ENCODE measurements at regions of chr1 and their contacts with region 1.

Region 1: GRCh38 chr1:107782217-107782845 is 182.6 kb downstream of the VAV3 start:
- DNase-seq: peak; percentile 34
- ATAC-seq: peak; percentile 59; the same call in 1 of the 2 replicates
- H3K4me3 ChIP-seq: no peak overlapping the region
- H3K27ac ChIP-seq: no peak overlapping the region
- H3K4me1 ChIP-seq: no peaks in the 10 kb centered on the region
- H3K27me3 ChIP-seq: peaks cover 6% of the 10 kb centered on the region; the same call in 1 of the 2 replicates
- CTCF ChIP-seq: peak; percentile 46 to 71 (median 48); a peak in 4 of 6 replicates
- POLR2A ChIP-seq: no peak
- RAD21 ChIP-seq: peak; percentile 78

Region 2: GRCh38 chr1:108125312-108126138 is 343.2 kb after region 1 on chr1:
- CTCF ChIA-PET with region 1: interaction called, 183 read pairs
- POLR2A ChIA-PET with region 1: interaction called, 3 read pairs
- RAD21 ChIA-PET with region 1: interaction called, 13 to 14 read pairs
- intact Hi-C with region 1: loop called (anchors 1 kb)
- DNase-seq: peak; percentile 57
- ATAC-seq: peak; percentile 95
- H3K4me3 ChIP-seq: no peak overlapping the region
- H3K27ac ChIP-seq: no peak overlapping the region
- H3K4me1 ChIP-seq: no peaks in the 10 kb centered on the region
- H3K27me3 ChIP-seq: peaks cover 4% of the 10 kb centered on the region
- CTCF ChIP-seq: peak; percentile 61 to 90 (median 85); a peak in 5 of 6 replicates
- POLR2A ChIP-seq: no peak
- RAD21 ChIP-seq: peak; percentile 92

Region 3: GRCh38 chr1:108559215-108560186 is 777.2 kb after region 1 on chr1 and contains the start of gene EEIG2:
- CTCF ChIA-PET with region 1: interaction called, 10 read pairs
- POLR2A ChIA-PET with region 1: no interaction called
- RAD21 ChIA-PET with region 1: no interaction called
- intact Hi-C with region 1: loop called (anchors 5 kb)
- DNase-seq: peak; percentile 69
- ATAC-seq: peak; percentile 83
- H3K4me3 ChIP-seq: peak within 1 kb of the TSS; percentile 64 to 70
- H3K27ac ChIP-seq: peak within 1 kb of the TSS; percentile 48; the same call in 1 of the 2 replicates
- H3K4me1 ChIP-seq: peaks cover 11 to 23% of the 10 kb centered on the region in 2 experiments
- H3K27me3 ChIP-seq: no peaks in the 10 kb centered on the region
- CTCF ChIP-seq: peak; percentile 32 to 63 (median 62); a peak in 5 of 6 replicates
- POLR2A ChIP-seq: no peak
- RAD21 ChIP-seq: no peak
- total RNA-seq, gene EEIG2: 16.0 TPM

Region 4: GRCh38 chr1:108643492-108644335 is 861.4 kb after region 1 on chr1:
- CTCF ChIA-PET with region 1: interaction called, 4 read pairs
- POLR2A ChIA-PET with region 1: no interaction called
- RAD21 ChIA-PET with region 1: no interaction called
- intact Hi-C with region 1: loop called (anchors 5 kb)
- DNase-seq: peak; percentile 15
- ATAC-seq: peak; percentile 71
- H3K4me3 ChIP-seq: no peak overlapping the region
- H3K27ac ChIP-seq: no peak overlapping the region
- H3K4me1 ChIP-seq: peaks cover 0 to 6% of the 10 kb centered on the region in 2 experiments; a peak in 1 of 4 replicates
- H3K27me3 ChIP-seq: peaks cover 3% of the 10 kb centered on the region; the same call in 1 of the 2 replicates
- CTCF ChIP-seq: peak; percentile 27 to 47 (median 33); a peak in 3 of 6 replicates
- POLR2A ChIP-seq: no peak
- RAD21 ChIP-seq: peak; percentile 62

Region 5: DNA sequence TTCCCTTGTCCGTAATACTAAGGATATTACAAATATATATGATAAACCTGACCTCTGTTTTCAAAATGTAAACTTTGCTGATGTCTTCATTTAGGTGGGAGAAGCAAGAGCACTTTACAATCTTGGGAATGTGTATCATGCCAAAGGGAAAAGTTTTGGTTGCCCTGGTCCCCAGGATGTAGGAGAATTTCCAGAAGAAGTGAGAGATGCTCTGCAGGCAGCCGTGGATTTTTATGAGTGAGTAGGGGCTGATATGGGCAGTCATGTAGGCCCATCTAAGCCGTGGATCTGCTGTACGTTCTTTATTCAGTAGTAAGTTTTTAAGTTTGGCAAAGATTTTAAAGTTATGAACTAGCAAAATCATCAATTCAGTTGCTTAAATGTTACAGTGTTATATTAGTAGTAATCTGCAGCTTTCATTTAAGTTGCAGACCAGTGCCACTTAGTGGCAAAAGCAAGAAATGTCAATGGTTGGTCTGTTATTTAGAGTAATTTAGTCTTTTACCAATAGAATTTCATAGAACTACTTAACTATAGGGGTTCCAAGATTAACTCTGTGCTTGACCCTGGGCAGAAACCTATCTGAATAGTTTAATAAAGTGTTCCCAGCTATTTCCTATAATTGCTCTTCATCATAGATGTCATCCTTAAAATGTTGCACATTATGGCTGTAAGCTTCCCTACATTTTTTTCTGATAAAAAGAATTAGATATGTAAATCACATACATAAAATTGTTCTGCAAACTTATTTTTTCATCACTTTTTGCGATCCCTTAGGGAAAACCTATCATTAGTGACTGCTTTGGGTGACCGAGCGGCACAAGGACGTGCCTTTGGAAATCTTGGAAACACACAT is 1115.8 kb after region 1 on chr1:
- CTCF ChIA-PET with region 1: no interaction called
- POLR2A ChIA-PET with region 1: no interaction called
- RAD21 ChIA-PET with region 1: no interaction called
- intact Hi-C with region 1: loop called (anchors 10 kb)
- DNase-seq: peak; percentile 40
- ATAC-seq: peak; percentile 81
- H3K4me3 ChIP-seq: no peak overlapping the region
- H3K27ac ChIP-seq: no peak overlapping the region
- H3K4me1 ChIP-seq: no peaks in the 10 kb centered on the region
- H3K27me3 ChIP-seq: no peaks in the 10 kb centered on the region
- CTCF ChIP-seq: peak; percentile 54 to 79 (median 71)
- POLR2A ChIP-seq: no peak
- RAD21 ChIP-seq: peak; percentile 78